Activated CD4-positive, alpha-beta memory T cell treated with anti-CD3 and anti-CD28 coated beads for 36 hours (primary cell): ENCODE measurements at regions of chr1 and their contacts with region 1.

Region 1: DNA sequence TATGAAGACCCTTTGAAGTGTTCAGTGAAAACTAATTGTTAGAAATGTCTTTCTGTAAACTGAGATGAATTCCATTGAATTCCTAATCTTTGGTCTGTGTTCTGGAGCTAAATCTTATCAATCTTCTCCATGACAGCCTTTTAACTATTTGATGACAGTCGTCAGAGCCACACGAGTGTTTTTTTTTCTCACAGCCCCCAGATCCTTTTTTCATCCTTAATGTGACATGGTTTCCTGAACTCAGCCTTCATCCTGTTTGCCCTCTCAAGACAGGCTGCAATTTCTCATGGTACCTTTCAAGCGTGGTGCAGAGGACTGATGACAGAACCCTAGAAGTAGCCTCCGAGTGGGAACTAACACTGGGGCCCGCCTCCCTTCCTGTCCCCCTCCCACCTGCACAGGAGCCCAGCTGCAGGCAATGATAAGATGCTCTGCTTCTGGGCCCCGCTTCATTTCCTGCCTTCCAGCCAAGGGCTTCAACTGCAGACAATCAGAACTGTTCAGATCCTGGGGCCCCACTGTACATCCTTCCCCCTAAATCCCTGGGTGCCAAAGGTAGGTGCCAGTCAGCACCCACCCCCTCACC is 114.6 kb upstream of the VAV3 start:
- DNase-seq: peak; percentile 70
- H3K4me3 Mint-ChIP-seq: no peak overlapping the region
- H3K27ac Mint-ChIP-seq: peak overlapping the region; percentile 64
- H3K4me1 Mint-ChIP-seq: peaks cover 61% of the 10 kb centered on the region
- H3K27me3 Mint-ChIP-seq: no peaks in the 10 kb centered on the region

Region 2: DNA sequence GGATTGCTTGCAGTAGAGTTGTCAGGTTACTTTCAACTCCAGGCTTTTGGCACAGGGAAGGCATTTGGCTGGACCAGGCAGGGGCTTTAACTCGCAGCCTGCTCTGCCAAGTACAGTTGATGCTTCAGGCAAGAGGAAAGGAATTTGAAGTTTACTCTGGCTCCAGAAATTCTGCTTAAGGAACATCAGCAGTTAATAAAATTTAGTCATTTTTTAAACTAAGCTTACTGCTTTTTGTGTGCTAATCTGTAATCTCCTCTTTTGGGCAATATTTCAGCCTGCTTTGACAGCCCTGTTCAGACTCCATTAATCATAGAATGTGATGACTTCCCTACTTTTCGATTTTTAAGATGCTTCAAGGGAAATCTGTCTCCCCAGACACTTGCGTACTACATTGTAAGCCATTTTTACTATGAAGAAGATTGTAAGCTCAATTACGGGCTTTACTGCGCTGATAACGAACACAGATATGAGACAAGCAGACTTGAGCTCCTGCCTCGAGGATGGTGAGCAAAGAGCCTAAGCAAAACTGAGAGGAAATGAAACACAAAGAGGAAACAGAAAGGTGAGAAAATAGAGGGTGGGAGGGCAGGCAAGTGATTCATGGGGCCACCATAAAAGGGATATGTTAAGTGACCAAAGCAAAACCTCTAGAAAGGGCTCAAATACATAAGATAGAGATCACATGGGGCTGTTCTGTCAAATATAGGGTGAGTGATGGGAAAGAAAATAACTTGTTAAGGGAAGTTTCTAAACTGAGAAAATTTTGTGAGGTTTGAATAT is 38.0 kb before region 1 on chr1:
- CTCF ChIA-PET with region 1: no interaction called
- POLR2A ChIA-PET with region 1: no interaction called
- intact Hi-C with region 1: loop called (anchors 5 kb)
- DNase-seq: no peak
- H3K4me3 Mint-ChIP-seq: no peak overlapping the region
- H3K27ac Mint-ChIP-seq: no peak overlapping the region
- H3K4me1 Mint-ChIP-seq: peaks cover 11% of the 10 kb centered on the region
- H3K27me3 Mint-ChIP-seq: no peaks in the 10 kb centered on the region

Region 3: GRCh38 chr1:108345787-108346517 is 266.4 kb after region 1 on chr1:
- CTCF ChIA-PET with region 1: no interaction called
- POLR2A ChIA-PET with region 1: no interaction called
- intact Hi-C with region 1: no loop called
- DNase-seq: no peak
- H3K4me3 Mint-ChIP-seq: no peak overlapping the region
- H3K27ac Mint-ChIP-seq: no peak overlapping the region
- H3K4me1 Mint-ChIP-seq: no peaks in the 10 kb centered on the region
- H3K27me3 Mint-ChIP-seq: peaks cover 8% of the 10 kb centered on the region